ENCODE measurements at regions of chr6 and their contacts with region 1.

Region 1: DNA sequence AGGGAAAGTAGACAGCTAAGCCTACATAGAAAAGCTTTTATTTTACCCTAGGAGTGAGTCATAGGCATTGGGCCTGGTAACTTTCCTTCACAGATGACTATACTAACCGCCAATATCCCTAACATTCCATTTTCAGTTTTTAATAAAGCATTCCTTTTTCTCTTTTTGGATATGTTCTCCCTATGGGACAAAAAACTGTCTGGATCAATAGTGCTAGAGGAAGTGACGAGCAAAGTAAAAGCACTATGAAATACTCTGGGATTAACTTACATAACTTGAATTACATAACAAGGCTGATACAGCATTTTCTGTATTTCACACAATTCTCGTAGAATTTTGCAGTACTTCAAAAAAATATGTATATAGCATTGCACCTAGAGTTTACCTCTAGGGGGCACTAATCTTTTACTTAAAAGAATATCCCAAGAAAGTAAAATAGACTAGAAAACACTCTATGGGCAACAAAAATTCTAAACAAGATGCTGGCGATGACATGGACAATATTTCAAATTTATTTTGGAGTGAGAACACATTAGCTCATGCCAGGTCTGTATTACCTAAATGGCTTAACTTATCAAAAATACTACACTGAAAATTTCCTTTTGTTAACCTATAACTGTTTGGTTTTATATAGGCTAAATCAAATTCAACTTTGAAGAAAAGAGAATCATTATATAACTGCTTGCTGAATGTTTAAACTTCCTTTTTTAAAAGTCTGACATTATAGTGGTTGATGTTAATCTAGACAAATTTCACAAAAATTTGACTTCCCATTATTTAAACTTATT is 66.3 kb upstream of the DST start:
- DNase-seq: no peak
- ATAC-seq: peak; percentile 51

Region 2: DNA sequence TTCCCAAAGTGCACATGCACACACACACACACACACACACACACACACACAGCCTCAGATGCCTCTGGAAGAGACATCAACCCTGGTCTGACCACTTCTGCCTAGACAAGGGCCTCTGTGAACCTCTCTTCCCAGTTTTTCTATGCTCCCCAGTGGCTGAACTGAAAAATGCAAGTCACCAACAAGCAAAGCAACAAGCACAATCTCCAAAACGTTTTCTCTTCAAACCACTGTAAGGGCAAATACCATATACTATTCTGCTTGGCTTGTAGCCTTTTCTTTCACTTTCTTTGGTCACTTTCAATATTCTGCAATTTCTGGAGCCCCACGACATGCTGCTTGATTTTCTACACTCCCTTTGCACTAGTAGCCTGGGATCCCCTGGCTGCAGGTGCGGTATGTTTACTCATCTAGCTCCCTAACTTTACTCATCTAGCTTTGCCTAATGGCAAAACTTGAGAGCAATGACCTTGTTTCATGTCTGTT is 55.1 kb after region 1 on chr6:
- intact Hi-C with region 1: loop called in 1 of 2 experiments (anchors 10 kb)
- DNase-seq: no peak
- ATAC-seq: peak; percentile 73

Region 3: GRCh38 chr6:56851541-56852259 is 142.7 kb after region 1 on chr6:
- intact Hi-C with region 1: loop called in 1 of 2 experiments (anchors 10 kb)
- DNase-seq: no peak
- ATAC-seq: peak; percentile 66

Measured in left colon (tissue), 2 donors.